Psoas muscle (tissue), 8 donors: ENCODE measurements at regions of chr10 and their contacts with region 1.

Region 1: DNA sequence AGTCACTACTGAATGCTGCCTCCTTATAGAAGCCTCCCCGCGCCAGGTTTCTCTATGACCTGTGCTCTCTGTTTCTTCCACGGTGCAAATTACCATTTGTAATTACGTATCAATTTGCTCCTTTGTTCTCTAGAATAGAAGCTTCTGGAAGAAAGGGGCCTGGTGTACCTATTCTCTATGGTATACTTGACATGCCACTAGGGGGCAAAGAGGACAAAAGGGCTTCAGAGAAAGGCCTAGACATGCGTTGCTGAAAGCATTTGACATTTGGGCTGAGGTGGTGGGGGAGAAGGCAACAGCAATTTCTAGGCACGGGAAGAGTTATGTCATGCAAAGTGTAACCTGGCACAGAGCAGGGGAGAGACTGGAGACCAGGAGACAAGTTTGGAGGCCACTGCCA is 148.7 kb downstream of the WDR11 start:
- DNase-seq: no peak
- ATAC-seq: no peak
- H3K4me3 ChIP-seq: no peak overlapping the region
- H3K27ac ChIP-seq: no peak overlapping the region
- H3K4me1 ChIP-seq: no peaks in the 10 kb centered on the region
- H3K27me3 ChIP-seq: peaks cover 0 to 1% (median 0%) of the 10 kb centered on the region in 3 donors
- CTCF ChIP-seq: no peak

Region 2: GRCh38 chr10:120861178-120861855 is 138.6 kb before region 1 on chr10:
- intact Hi-C with region 1: no loop called
- DNase-seq: no peak
- ATAC-seq: no peak
- H3K4me3 ChIP-seq: no peak overlapping the region
- H3K27ac ChIP-seq: no peak overlapping the region
- H3K4me1 ChIP-seq: no peaks in the 10 kb centered on the region
- H3K27me3 ChIP-seq: no peaks in the 10 kb centered on the region
- CTCF ChIP-seq: no peak

Region 3: GRCh38 chr10:122740649-122741048 is 1740.8 kb after region 1 on chr10:
- intact Hi-C with region 1: loop called in 1 of 2 experiments (anchors 10 kb)
- DNase-seq: no peak
- ATAC-seq: no peak
- H3K4me3 ChIP-seq: no peak overlapping the region
- H3K27ac ChIP-seq: no peak overlapping the region
- H3K4me1 ChIP-seq: no peaks in the 10 kb centered on the region
- H3K27me3 ChIP-seq: peaks cover 0 to 4% (median 2%) of the 10 kb centered on the region in 3 donors
- CTCF ChIP-seq: no peak